ENCODE measurements at regions of chr18 and their contacts with region 1.

Region 1: DNA sequence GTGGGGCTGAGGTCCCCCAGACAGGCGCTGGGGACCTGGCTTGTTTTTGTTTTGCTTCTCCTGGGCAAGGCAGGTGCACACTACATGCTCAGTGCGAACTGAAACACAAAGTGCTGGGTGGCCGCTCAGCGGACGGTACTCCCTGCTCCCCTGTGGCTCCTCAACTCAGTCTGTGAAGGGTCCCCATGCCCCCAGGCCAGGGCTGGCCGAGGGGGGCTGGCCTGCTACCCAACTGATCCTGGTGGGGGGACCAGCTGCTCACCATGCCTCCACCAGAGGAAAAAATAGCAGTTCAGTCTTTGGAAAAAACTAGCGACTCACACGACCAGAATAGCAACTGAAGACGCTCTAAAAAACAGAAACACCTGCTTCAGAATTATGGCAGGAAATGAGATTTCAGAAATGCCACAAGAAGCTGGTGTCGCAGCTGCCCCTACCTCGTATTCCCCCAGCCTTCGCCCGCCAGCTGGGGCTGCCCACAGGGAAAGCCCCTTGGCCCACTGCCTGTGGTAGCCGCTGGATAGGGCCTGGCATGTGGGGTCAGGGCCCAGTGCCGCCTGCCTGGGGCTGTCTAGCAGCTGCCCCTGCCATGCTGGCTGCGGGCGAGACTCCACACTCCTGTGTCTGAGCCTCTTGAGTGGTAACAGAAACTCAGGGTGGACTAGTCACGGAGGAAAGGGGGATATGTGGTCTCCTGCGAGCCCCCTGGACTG is 43.7 kb downstream of the MEX3C start:
- DNase-seq: peak; percentile 55
- ATAC-seq: peak; percentile 74
- H3K4me3 Mint-ChIP-seq: peak overlapping the region; percentile 81
- H3K27ac Mint-ChIP-seq: peak overlapping the region; percentile 97
- H3K4me1 Mint-ChIP-seq: peaks cover 48% of the 10 kb centered on the region
- H3K27me3 Mint-ChIP-seq: no peaks in the 10 kb centered on the region

Region 2: GRCh38 chr18:51006061-51006818 is 147.6 kb before region 1 on chr18:
- CTCF ChIA-PET with region 1: no interaction called
- POLR2A ChIA-PET with region 1: no interaction called
- DNase-seq: no peak
- ATAC-seq: no peak
- H3K4me3 Mint-ChIP-seq: no peak overlapping the region
- H3K27ac Mint-ChIP-seq: no peak overlapping the region
- H3K4me1 Mint-ChIP-seq: no peaks in the 10 kb centered on the region
- H3K27me3 Mint-ChIP-seq: no peaks in the 10 kb centered on the region

Region 3: DNA sequence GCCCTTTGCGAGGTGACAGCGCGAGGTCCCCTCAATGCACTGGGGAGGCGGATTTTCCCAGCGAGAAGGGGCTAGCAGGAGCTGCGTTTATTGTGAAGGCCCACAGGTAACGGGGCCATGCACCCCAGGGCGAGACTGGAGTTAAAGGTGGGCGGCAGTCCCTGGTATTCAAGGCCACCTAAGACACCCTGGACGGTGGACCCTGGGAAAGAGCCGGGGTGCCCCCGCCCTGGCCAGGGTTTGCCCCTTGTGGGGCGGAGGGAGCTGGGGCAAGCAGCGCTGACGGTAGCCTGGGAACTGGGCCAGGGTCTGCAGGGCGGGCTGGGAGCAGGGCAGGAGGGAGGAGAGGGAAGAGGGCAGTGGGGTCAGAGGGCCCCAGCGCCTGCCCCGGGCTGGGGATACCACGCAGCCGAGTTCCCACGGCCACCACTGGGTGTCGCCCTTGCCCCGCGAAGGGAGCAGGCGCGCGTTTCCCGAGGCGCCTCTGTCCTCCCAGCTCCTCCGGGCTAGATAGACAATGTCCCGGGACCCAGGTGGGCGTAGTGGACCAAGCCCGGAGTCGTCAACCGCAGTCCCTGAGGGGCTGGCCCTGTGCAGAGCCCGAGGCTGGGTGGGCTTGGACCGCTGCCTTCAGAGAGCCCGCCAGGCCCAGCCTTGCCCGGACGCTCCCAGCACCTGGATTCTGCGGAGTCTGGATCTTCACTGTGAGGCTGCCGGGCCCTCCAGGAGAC is 43.6 kb before region 1 on chr18:
- CTCF ChIA-PET with region 1: interaction called, 11 read pairs
- POLR2A ChIA-PET with region 1: no interaction called
- DNase-seq: peak; percentile 69
- ATAC-seq: peak; percentile 93
- H3K4me3 Mint-ChIP-seq: no peak overlapping the region
- H3K27ac Mint-ChIP-seq: no peak overlapping the region
- H3K4me1 Mint-ChIP-seq: peaks cover 20% of the 10 kb centered on the region
- H3K27me3 Mint-ChIP-seq: no peaks in the 10 kb centered on the region

Region 4: GRCh38 chr18:51197661-51198424 is 44.0 kb after region 1 on chr18 and contains the start of gene MEX3C:
- CTCF ChIA-PET with region 1: interaction called, 15 read pairs
- POLR2A ChIA-PET with region 1: interaction called, 54 read pairs
- DNase-seq: peak; percentile 99
- ATAC-seq: peak; percentile 86
- H3K4me3 Mint-ChIP-seq: peak within 1 kb of the TSS; percentile 95
- H3K27ac Mint-ChIP-seq: peak within 1 kb of the TSS; percentile 98
- H3K4me1 Mint-ChIP-seq: peaks cover 24% of the 10 kb centered on the region
- H3K27me3 Mint-ChIP-seq: no peaks in the 10 kb centered on the region
- total RNA-seq, gene MEX3C: 40.4 to 45.8 TPM

Region 5: DNA sequence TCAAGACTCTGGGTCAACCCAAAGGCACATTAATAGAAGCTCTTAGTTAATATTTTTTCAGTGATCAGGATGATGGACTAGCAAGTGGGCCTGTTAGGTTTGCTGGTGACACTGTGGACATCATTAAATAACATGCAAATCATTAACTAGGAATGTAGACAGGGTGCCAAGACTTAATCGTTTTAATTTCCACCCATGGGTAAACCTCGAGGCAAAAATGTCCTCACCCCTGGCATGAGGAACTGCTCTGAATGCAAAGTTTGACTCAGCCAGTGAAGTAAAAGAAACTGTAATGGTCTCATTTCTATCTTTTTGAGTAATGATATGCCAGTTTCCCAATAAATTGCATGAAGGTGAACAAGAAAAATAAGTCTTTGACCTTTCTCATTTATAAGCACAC is 196.3 kb after region 1 on chr18:
- CTCF ChIA-PET with region 1: no interaction called
- POLR2A ChIA-PET with region 1: no interaction called
- DNase-seq: no peak
- ATAC-seq: no peak
- H3K4me3 Mint-ChIP-seq: no peak overlapping the region
- H3K27ac Mint-ChIP-seq: no peak overlapping the region
- H3K4me1 Mint-ChIP-seq: no peaks in the 10 kb centered on the region
- H3K27me3 Mint-ChIP-seq: peaks cover 53% of the 10 kb centered on the region